ENCODE measurements at regions of chr7 and their contacts with region 1.

Region 1: DNA sequence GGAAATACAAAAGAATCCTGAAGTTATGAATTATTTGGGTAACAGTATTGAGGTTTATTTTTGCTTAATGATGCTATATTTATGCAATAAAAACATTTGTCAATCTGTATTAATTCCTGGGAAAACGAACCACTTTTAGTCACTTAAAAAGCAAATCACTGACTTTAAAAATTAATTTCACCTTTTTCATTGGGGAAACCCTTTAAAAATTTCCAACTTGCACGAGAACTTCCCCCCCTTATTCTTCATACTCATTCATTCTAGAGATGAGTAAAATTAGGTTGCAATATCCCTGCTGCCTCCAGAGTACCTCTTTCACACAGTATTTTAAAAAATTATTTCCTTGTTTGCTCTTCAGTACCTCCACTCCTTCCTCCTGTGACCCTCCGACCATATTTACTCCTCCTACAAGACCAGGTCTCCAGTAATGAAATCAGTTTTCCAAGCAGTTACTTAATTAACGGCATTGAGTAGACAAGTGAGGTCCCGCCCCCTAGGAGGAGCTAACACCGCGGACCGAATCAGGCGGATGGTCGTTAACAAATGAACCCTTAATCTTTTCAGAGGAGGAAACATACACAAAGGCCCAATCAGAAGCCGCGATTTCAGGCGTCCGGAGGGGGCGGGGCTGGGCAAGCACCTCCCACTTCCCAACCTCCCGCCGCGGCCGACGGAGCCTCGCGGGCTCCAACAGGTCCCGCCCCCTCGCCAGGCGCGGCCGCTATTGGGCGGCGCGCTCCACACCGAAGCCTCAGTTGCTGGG is 465 bp upstream of the TRIM24 start:
- DNase-seq: peak; percentile 98
- ATAC-seq: peak; percentile 97 to 98
- H3K4me3 ChIP-seq: peak overlapping the region; percentile 86
- H3K27ac ChIP-seq: no peak overlapping the region
- H3K4me1 ChIP-seq: peaks cover 11% of the 10 kb centered on the region
- H3K27me3 ChIP-seq: no peaks in the 10 kb centered on the region
- CTCF ChIP-seq: no peak

Region 2: DNA sequence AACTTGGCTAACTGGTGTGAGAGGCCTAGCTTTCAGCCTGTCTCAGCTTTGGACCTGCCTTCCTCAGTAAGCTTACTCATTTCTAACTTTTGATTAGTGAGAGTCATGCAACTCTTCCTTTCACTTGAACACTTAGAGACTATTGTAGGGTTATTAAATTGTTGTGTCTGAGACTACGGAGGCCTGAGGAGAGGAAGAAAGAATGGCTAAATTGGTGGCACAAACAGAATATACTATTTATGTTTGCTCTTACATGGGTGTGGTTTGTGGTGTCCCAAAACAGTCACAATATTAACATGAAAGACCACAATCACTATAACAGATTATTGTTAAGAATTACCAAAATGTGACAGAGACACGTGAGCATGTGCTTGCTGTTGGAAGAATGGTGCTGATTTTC is 82.6 kb after region 1 on chr7:
- intact Hi-C with region 1: loop called (anchors 10 kb)
- DNase-seq: no peak
- ATAC-seq: no peak
- H3K4me3 ChIP-seq: no peak overlapping the region
- H3K27ac ChIP-seq: no peak overlapping the region
- H3K4me1 ChIP-seq: no peaks in the 10 kb centered on the region
- H3K27me3 ChIP-seq: no peaks in the 10 kb centered on the region
- CTCF ChIP-seq: no peak

Measured in lower lobe of right lung (tissue), 2 donors.